OCI-LY7 (cell line): ENCODE measurements at regions of chr11 and their contacts with region 1.

Region 1: GRCh38 chr11:1515082-1516060 is 28.8 kb upstream of the MOB2 start:
- DNase-seq: peak; percentile 57
- H3K4me3 ChIP-seq: no peak overlapping the region
- H3K27ac ChIP-seq: no peak overlapping the region
- H3K4me1 ChIP-seq: peaks cover 26% of the 10 kb centered on the region
- CTCF ChIP-seq: peak; percentile 85

Region 2: GRCh38 chr11:1113405-1114201 is 401.8 kb before region 1 on chr11:
- CTCF ChIA-PET with region 1: no interaction called
- POLR2A ChIA-PET with region 1: no interaction called
- intact Hi-C with region 1: loop called (anchors 10 kb)
- DNase-seq: peak; percentile 19
- H3K4me3 ChIP-seq: no peak overlapping the region
- H3K27ac ChIP-seq: no peak overlapping the region
- H3K4me1 ChIP-seq: no peaks in the 10 kb centered on the region
- CTCF ChIP-seq: no peak

Region 3: GRCh38 chr11:1453611-1454034 is 61.7 kb before region 1 on chr11:
- CTCF ChIA-PET with region 1: interaction called, 3 read pairs
- POLR2A ChIA-PET with region 1: no interaction called
- intact Hi-C with region 1: loop called (anchors 1 kb)
- DNase-seq: peak; percentile 74
- H3K4me3 ChIP-seq: no peak overlapping the region
- H3K27ac ChIP-seq: no peak overlapping the region
- H3K4me1 ChIP-seq: no peaks in the 10 kb centered on the region
- CTCF ChIP-seq: peak; percentile 76